ENCODE measurements at regions of chr14 and their contacts with region 1.

Region 1: GRCh38 chr14:49852301-49853157 is at the start of gene NEMF:
- DNase-seq: peak; percentile 89
- H3K4me3 ChIP-seq: peak within 1 kb of the TSS; percentile 91
- H3K27ac ChIP-seq: peak within 1 kb of the TSS; percentile 74
- H3K27me3 ChIP-seq: no peaks in the 10 kb centered on the region
- CTCF ChIP-seq: peak; percentile 83

Region 2: DNA sequence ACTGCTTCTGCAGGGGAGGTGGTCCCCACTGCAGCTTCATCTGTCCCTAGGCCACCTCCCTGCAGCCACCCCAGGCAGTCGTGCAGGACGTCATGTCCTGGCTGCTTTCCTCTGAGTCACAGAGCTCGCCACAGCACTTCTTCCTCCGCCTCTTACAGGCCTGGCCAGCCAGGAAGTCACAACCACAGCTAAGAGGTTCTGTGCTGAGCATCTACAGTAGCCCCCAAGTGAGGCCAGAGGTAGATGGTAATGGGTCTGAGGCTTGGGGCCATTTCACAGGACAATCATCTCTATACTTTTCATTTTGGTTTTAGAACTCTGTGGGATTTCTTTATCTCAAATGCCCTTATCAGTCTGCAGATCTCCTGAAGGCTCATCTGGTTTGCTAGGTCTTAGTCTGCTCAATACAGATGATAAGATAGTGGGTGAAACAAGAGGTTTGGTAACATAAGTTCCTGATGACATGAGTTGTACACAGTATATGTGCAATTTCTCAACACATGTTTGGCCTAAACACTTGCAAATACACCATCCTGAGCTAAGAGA is 146.8 kb after region 1 on chr14:
- in situ Hi-C with region 1: loop called (anchors 25 kb)
- DNase-seq: peak; percentile 88
- H3K4me3 ChIP-seq: no peak overlapping the region
- H3K27ac ChIP-seq: peak overlapping the region; percentile 83
- H3K27me3 ChIP-seq: no peaks in the 10 kb centered on the region
- CTCF ChIP-seq: no peak